Sciatic nerve (tissue), 2 donors: ENCODE measurements at regions of chr7 and their contacts with region 1.

Region 1: DNA sequence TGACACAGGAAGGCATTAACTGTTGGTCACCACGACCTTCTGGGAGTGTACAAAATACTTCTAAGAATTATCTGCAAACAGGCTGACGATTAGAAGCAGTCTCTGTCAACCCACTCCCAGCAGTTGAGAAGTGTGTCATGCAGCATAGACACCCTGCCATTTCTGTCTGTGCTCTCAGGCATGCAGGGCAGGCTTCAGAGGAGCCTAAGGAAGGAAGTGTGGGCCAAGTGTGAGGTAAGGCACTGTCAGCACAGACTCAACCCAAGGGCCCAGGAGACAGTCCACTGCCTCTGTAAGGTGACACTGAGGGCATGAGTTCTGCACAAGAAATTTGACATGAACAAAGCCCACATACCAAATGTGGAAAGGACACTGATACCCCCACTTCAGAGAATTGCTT is 109.0 kb upstream of the VIPR2 start:
- DNase-seq: no peak
- ATAC-seq: no peak

Region 2: DNA sequence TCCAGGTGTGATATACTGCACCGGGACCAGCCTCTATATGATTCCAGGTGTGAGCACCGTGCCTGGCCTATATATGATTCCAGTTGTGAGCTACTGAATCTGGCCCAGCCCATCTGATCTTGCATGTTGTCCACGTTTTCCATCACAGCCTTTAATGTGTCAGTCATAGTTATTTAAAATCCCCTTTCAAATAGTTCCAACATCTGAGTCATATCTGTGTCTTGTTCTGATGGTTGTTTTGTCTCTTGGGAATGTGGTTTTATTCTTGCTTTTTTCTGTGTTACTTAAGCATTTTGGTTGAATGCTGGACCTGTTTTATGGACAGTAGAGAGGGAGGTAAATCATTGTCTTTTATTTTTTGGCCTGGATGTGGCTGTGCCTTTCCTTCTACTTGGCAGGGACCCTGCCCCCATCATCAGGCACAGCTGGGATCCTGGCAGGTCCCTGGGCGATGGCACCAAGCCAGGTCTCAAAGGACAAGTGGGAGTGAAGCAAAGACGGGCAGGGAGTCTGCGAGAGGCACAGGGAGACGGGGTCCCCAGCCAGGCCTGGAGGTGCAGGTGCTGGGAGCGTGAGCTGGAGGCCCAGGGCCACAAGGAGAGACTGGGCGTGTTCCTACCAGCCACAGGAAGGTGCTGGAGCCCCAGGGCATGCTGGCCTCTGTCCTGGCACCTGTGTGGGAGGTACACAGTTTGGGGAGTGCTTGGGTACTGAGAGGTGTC is 302.6 kb before region 1 on chr7:
- intact Hi-C with region 1: no loop called
- DNase-seq: no peak
- ATAC-seq: no peak

Region 3: GRCh38 chr7:159188011-159188410 is 65.6 kb before region 1 on chr7:
- intact Hi-C with region 1: loop called (anchors 2 kb)
- DNase-seq: no peak
- ATAC-seq: no peak